HEK293 (cell line): ENCODE measurements at regions of chr13 and their contacts with region 1.

Region 1: GRCh38 chr13:52809310-52809769 is 39.1 kb downstream of the PCDH8 start:
- H3K4me3 ChIP-seq: no peak overlapping the region
- H3K27ac ChIP-seq: no peak overlapping the region
- H3K4me1 ChIP-seq: peaks cover 9% of the 10 kb centered on the region
- CTCF ChIP-seq: peak; percentile 26; the same call in 1 of the 2 replicates

Region 2: DNA sequence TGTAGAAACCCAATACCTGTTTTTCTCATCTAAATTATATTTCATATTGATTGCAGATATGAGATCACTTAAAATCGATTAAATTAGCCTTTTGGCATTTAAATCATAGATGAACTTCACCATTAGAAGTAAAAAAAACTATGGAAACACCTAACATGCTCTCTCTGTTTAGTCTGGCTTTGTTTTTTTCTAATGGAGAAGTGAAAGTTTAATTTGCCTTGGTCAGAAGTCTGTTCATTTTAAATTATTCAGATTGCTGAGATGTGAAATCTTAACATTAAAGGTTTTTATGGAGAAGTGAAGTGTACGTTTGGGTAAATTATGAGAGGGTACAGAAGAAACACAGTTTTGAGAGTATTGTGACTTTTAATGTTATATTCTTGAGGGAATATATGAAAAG is 150.0 kb before region 1 on chr13:
- CTCF ChIA-PET with region 1: interaction called, 26 read pairs
- POLR2A ChIA-PET with region 1: no interaction called
- H3K4me3 ChIP-seq: no peak overlapping the region
- H3K27ac ChIP-seq: no peak overlapping the region
- H3K4me1 ChIP-seq: no peaks in the 10 kb centered on the region
- CTCF ChIP-seq: no peak